ENCODE measurements at regions of chr7 and their contacts with region 1.

Region 1: GRCh38 chr7:44847508-44847920 is 373 bp downstream of the H2AZ2 start:
- DNase-seq: peak; percentile 87 to 91 (median 89)
- ATAC-seq: peak; percentile 75
- H3K4me3 ChIP-seq: peak overlapping the region; percentile 72
- H3K27ac ChIP-seq: peak overlapping the region; percentile 98
- H3K4me1 ChIP-seq: peaks cover 15% of the 10 kb centered on the region in 2 experiments; a peak in 4 of 5 replicates
- H3K27me3 ChIP-seq: no peaks in the 10 kb centered on the region
- CTCF ChIP-seq: peak; percentile 76 to 81 (median 79)
- EP300 ChIP-seq: peak; percentile 88; the same call in 1 of the 2 replicates
- POLR2A ChIP-seq: peak; percentile 65
- RAD21 ChIP-seq: peak; percentile 76 to 88

Region 2: GRCh38 chr7:44587843-44588711 is 259.4 kb before region 1 on chr7:
- CTCF ChIA-PET with region 1: interaction called, 9 read pairs
- POLR2A ChIA-PET with region 1: interaction called, 3 read pairs
- in situ Hi-C with region 1: no loop called
- intact Hi-C with region 1: loop called (anchors 1 kb)
- DNase-seq: peak in 1 of 4 experiments; percentile 71
- ATAC-seq: peak; percentile 83
- H3K4me3 ChIP-seq: no peak overlapping the region
- H3K27ac ChIP-seq: no peak overlapping the region
- H3K4me1 ChIP-seq: peaks cover 1% of the 10 kb centered on the region in 2 experiments; a peak in 4 of 5 replicates
- H3K27me3 ChIP-seq: no peaks in the 10 kb centered on the region
- CTCF ChIP-seq: peak; percentile 44 to 82 (median 59); a peak in 5 of 6 replicates
- EP300 ChIP-seq: no peak
- POLR2A ChIP-seq: no peak
- RAD21 ChIP-seq: peak; percentile 93 to 95

Region 3: GRCh38 chr7:44748045-44748947 is 99.2 kb before region 1 on chr7 and contains the start of gene ZMIZ2:
- CTCF ChIA-PET with region 1: no interaction called
- POLR2A ChIA-PET with region 1: interaction called, 7 read pairs
- in situ Hi-C with region 1: no loop called
- intact Hi-C with region 1: loop called (anchors 10 kb)
- DNase-seq: peak; percentile 90 to 98 (median 98)
- ATAC-seq: peak; percentile 90
- H3K4me3 ChIP-seq: peak within 1 kb of the TSS; percentile 76
- H3K27ac ChIP-seq: peak within 1 kb of the TSS; percentile 96
- H3K4me1 ChIP-seq: peaks cover 26 to 33% of the 10 kb centered on the region in 2 experiments; a peak in 4 of 5 replicates
- H3K27me3 ChIP-seq: no peaks in the 10 kb centered on the region
- CTCF ChIP-seq: no peak
- EP300 ChIP-seq: no peak; the same call in 1 of the 2 replicates
- POLR2A ChIP-seq: peak; percentile 66
- RAD21 ChIP-seq: no peak
- polyA plus RNA-seq, gene ZMIZ2: 0.13 to 0.18 TPM

Region 4: GRCh38 chr7:44824894-44825526 is 22.5 kb before region 1 on chr7:
- CTCF ChIA-PET with region 1: no interaction called
- POLR2A ChIA-PET with region 1: interaction called, 20 read pairs
- in situ Hi-C with region 1: no loop called
- intact Hi-C with region 1: no loop called
- DNase-seq: no peak
- ATAC-seq: peak; percentile 54
- H3K4me3 ChIP-seq: no peak overlapping the region
- H3K27ac ChIP-seq: no peak overlapping the region
- H3K4me1 ChIP-seq: peaks cover 4 to 19% of the 10 kb centered on the region in 2 experiments; a peak in 4 of 5 replicates
- H3K27me3 ChIP-seq: no peaks in the 10 kb centered on the region
- CTCF ChIP-seq: no peak
- EP300 ChIP-seq: no peak
- POLR2A ChIP-seq: no peak
- RAD21 ChIP-seq: 0 out of 4 replicates have a peak, but pooled peaks have one; percentile 7 to 17

Region 5: DNA sequence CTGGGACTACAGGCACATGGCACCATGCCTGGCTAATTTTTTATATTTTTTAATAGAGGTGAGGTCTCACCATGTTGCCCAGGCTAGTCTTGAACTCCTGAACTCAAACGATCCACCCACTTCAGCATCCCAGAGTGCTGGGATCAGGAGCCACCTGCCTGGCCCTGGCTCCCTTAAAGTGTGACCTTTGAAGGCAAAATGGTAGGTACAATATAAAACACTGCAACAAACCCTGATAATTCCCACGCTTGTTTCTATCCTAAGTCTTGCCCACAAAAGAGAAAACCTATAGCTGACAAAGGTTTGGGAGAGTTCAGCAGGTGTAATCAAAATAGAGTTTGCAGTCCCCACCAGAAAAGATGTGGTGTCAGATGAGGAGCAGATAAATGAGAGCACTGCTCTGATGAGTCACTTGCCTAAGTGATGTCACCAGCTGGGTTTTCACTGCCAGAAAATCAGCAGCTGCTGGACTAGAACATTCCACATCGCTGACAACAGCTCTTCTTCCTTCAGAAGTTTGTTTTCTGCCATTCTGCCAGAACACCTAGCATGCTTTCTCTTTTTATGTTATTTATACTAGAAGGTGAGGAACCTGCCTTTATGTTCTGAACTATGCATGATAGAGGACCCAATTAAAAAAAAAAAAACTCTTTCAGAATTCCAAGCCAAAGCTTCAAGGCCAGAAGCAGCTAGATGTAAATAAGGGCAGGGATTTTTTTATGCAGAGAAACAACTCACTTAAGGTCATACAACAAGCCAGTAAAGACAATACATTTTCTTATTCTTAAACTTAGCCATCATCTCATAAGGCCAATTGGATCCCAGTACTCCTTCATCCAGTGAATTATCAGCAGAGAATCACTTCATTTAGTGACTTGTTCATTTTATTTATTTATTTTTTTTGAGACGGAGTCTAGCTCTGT is 19.8 kb after region 1 on chr7:
- CTCF ChIA-PET with region 1: no interaction called
- POLR2A ChIA-PET with region 1: interaction called, 18 read pairs
- in situ Hi-C with region 1: no loop called
- intact Hi-C with region 1: no loop called
- DNase-seq: peak; percentile 36 to 70 (median 48)
- ATAC-seq: peak; percentile 88
- H3K4me3 ChIP-seq: no peak overlapping the region
- H3K27ac ChIP-seq: no peak overlapping the region
- H3K4me1 ChIP-seq: peaks cover 0 to 11% of the 10 kb centered on the region in 2 experiments; a peak in 3 of 5 replicates
- H3K27me3 ChIP-seq: no peaks in the 10 kb centered on the region
- CTCF ChIP-seq: no peak
- EP300 ChIP-seq: peak; percentile 32; the same call in 1 of the 2 replicates
- POLR2A ChIP-seq: no peak
- RAD21 ChIP-seq: no peak

Region 6: GRCh38 chr7:44921607-44922359 is 74.3 kb after region 1 on chr7:
- CTCF ChIA-PET with region 1: no interaction called
- POLR2A ChIA-PET with region 1: interaction called, 16 read pairs
- in situ Hi-C with region 1: no loop called
- intact Hi-C with region 1: no loop called
- DNase-seq: peak; percentile 82 to 91 (median 85)
- ATAC-seq: peak; percentile 98
- H3K4me3 ChIP-seq: 0 out of 2 replicates have a peak overlapping the region, but pooled peaks have one; percentile 2
- H3K27ac ChIP-seq: peak overlapping the region; percentile 51
- H3K4me1 ChIP-seq: peaks cover 7 to 13% of the 10 kb centered on the region in 2 experiments; a peak in 3 of 5 replicates
- H3K27me3 ChIP-seq: no peaks in the 10 kb centered on the region
- CTCF ChIP-seq: peak; percentile 85 to 88 (median 85)
- EP300 ChIP-seq: peak; percentile 14; the same call in 1 of the 2 replicates
- POLR2A ChIP-seq: peak; percentile 74
- RAD21 ChIP-seq: peak; percentile 90 to 91

Region 7: GRCh38 chr7:44986218-44987053 is 138.9 kb after region 1 on chr7:
- CTCF ChIA-PET with region 1: no interaction called
- POLR2A ChIA-PET with region 1: interaction called, 6 read pairs
- in situ Hi-C with region 1: no loop called
- intact Hi-C with region 1: loop called (anchors 5 kb)
- DNase-seq: peak; percentile 81 to 98 (median 86)
- ATAC-seq: peak; percentile 85
- H3K4me3 ChIP-seq: peak overlapping the region; percentile 98
- H3K27ac ChIP-seq: peak overlapping the region; percentile 97
- H3K4me1 ChIP-seq: peaks cover 22 to 38% of the 10 kb centered on the region in 2 experiments; a peak in 4 of 5 replicates
- H3K27me3 ChIP-seq: no peaks in the 10 kb centered on the region
- CTCF ChIP-seq: no peak
- EP300 ChIP-seq: no peak; the same call in none of the 2 replicates
- POLR2A ChIP-seq: peak; percentile 99
- RAD21 ChIP-seq: 0 out of 4 replicates have a peak, but pooled peaks of 1 of the 2 experiments have one; percentile 6